ENCODE measurements at regions of chr10 and their contacts with region 1.

Region 1: DNA sequence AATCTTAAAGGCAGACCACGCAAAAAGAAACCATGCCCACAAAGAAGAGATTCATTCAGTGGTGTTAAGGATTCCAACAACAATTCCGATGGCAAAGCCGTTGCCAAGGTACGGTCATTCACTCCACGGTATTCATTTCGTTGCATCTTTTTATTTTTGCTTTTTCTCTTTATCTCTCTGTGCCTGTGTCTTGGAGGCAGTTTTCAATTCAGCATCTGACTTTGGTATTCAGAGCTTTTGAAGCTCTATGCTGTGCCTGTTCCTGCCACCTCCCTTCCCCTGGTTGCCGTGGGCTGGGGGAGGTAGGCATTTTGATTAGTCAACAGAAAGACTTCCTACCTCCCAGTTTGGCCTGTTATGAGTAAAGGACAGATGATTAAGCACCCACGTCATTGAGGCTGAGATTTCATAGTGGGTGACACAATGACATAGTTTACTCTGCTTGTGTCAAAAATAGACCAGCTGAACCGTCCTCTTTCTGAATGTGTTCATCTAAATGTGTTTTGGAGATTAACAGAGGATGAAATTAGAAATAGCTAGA is 149.5 kb downstream of the ARID5B start:
- DNase-seq: peak; percentile 89
- ATAC-seq: peak; percentile 48
- H3K4me3 Mint-ChIP-seq: peak overlapping the region; percentile 87
- H3K27ac Mint-ChIP-seq: peak overlapping the region; percentile 100
- H3K4me1 Mint-ChIP-seq: peaks cover 95% of the 10 kb centered on the region
- H3K27me3 Mint-ChIP-seq: no peaks in the 10 kb centered on the region

Region 2: DNA sequence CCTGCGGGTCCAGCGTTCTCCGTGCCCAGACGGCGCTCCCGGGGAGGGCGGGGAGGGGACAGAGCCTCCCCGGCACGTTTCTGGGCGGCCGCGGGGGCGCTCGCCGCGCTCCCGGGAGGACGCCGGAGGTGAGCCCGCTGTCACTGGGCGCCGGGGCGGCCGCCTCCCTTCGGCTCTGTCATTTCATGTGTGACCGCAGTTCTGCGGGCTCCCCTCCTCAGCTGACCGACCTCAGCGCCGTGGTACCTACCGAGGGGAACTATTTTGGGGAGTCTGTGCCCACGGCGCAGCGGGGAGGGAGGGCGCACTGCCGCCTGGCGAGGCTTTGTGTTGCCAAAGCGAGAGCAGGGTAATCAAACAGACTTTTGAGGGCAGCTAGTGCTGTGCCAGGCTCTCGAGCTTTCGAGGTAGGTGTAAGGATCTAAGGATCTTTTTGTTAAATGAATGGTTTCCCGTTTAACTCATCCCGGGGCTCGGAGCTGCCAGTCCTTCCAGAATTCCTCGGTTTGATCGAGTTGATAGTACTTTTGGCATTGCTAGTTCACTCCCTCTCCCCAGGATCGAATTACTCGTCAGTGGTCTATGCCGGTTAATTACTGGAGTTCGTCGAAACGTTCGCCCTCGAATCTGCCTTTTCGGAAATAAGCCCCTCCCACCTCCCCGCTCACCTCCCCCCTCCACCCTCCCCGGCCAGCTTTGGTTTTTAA is 147.6 kb before region 1 on chr10:
- CTCF ChIA-PET with region 1: interaction called, 26 read pairs
- POLR2A ChIA-PET with region 1: interaction called, 74 read pairs
- intact Hi-C with region 1: loop called (anchors 1 kb)
- DNase-seq: peak; percentile 86
- ATAC-seq: peak; percentile 46
- H3K4me3 Mint-ChIP-seq: peak overlapping the region; percentile 94
- H3K27ac Mint-ChIP-seq: peak overlapping the region; percentile 100
- H3K4me1 Mint-ChIP-seq: peaks cover 40% of the 10 kb centered on the region
- H3K27me3 Mint-ChIP-seq: no peaks in the 10 kb centered on the region

Region 3: GRCh38 chr10:61987951-61988379 is 63.0 kb before region 1 on chr10:
- CTCF ChIA-PET with region 1: interaction called, 21 read pairs
- POLR2A ChIA-PET with region 1: interaction called, 51 read pairs
- intact Hi-C with region 1: loop called (anchors 1 kb)
- DNase-seq: peak; percentile 40
- ATAC-seq: peak; percentile 89
- H3K4me3 Mint-ChIP-seq: peak overlapping the region; percentile 29
- H3K27ac Mint-ChIP-seq: peak overlapping the region; percentile 99
- H3K4me1 Mint-ChIP-seq: peaks cover 92% of the 10 kb centered on the region
- H3K27me3 Mint-ChIP-seq: no peaks in the 10 kb centered on the region

Region 4: GRCh38 chr10:62025901-62026879 is 24.8 kb before region 1 on chr10:
- CTCF ChIA-PET with region 1: interaction called, 9 read pairs
- POLR2A ChIA-PET with region 1: interaction called, 45 read pairs
- intact Hi-C with region 1: loop called (anchors 2 kb)
- DNase-seq: no peak
- ATAC-seq: no peak
- H3K4me3 Mint-ChIP-seq: no peak overlapping the region
- H3K27ac Mint-ChIP-seq: peak overlapping the region; percentile 66
- H3K4me1 Mint-ChIP-seq: peaks cover 92% of the 10 kb centered on the region
- H3K27me3 Mint-ChIP-seq: no peaks in the 10 kb centered on the region

Region 5: GRCh38 chr10:62082729-62083411 is 31.9 kb after region 1 on chr10:
- CTCF ChIA-PET with region 1: interaction called, 5 read pairs
- POLR2A ChIA-PET with region 1: interaction called, 9 read pairs
- intact Hi-C with region 1: loop called in 1 of 2 experiments (anchors 2 kb)
- DNase-seq: peak; percentile 71
- ATAC-seq: peak; percentile 78
- H3K4me3 Mint-ChIP-seq: peak overlapping the region; percentile 52
- H3K27ac Mint-ChIP-seq: peak overlapping the region; percentile 90
- H3K4me1 Mint-ChIP-seq: peaks cover 82% of the 10 kb centered on the region
- H3K27me3 Mint-ChIP-seq: no peaks in the 10 kb centered on the region

Region 6: GRCh38 chr10:62637249-62638061 is 586.5 kb after region 1 on chr10:
- CTCF ChIA-PET with region 1: no interaction called
- POLR2A ChIA-PET with region 1: no interaction called
- intact Hi-C with region 1: loop called in 1 of 2 experiments (anchors 5 kb)
- DNase-seq: peak; percentile 82
- ATAC-seq: peak; percentile 95
- H3K4me3 Mint-ChIP-seq: no peak overlapping the region
- H3K27ac Mint-ChIP-seq: no peak overlapping the region
- H3K4me1 Mint-ChIP-seq: peaks cover 21% of the 10 kb centered on the region
- H3K27me3 Mint-ChIP-seq: no peaks in the 10 kb centered on the region

Measured in activated CD4-positive, alpha-beta T cell treated with anti-CD3 and anti-CD28 coated beads for 36 hours (primary cell).